ENCODE measurements at regions of chr9 and their contacts with region 1.

Region 1: GRCh38 chr9:126985870-126986498 is 71.4 kb downstream of the RALGPS1 start:
- DNase-seq: peak; percentile 82
- H3K4me3 Mint-ChIP-seq: peak overlapping the region; percentile 49
- H3K27ac Mint-ChIP-seq: peak overlapping the region; percentile 67
- H3K4me1 Mint-ChIP-seq: peaks cover 40% of the 10 kb centered on the region
- H3K27me3 Mint-ChIP-seq: peaks cover 68% of the 10 kb centered on the region

Region 2: DNA sequence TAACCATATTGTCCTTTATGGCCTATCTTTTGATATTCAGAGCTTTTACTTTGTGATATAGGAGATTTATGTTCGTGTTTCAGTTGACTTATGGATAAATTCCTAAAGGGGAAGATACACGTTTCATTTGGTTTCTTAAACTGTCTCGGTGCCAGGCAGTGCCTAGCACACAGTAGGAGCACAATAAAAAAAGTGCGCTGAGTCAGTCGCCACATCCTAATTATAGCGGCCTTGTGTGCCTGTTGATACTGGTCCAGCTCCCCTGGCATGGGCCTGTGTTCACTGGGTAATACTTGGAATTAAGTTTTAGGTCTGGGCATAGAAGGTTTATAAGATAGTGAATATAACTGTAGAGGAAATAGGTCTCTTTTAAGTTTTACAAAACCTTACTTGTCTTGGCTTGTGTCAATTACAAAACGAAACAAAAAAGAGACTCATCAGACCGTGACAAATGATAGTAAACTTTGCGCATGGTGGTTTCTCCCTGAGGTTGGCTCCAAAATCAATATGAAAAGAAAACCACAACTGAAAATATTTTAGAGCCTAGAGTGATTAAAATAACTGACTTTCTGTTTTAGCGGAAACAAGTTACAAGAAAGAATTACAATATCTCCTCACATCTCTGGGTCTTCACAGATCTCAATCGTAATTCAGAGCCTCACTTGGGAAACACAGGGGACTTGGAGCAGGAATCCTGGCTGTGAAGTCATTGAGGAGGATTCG is 574.6 kb before region 1 on chr9:
- intact Hi-C with region 1: loop called (anchors 10 kb)
- DNase-seq: peak; percentile 46
- H3K4me3 Mint-ChIP-seq: peak overlapping the region; percentile 35
- H3K27ac Mint-ChIP-seq: peak overlapping the region; percentile 58
- H3K4me1 Mint-ChIP-seq: peaks cover 32% of the 10 kb centered on the region
- H3K27me3 Mint-ChIP-seq: peaks cover 13% of the 10 kb centered on the region

Region 3: DNA sequence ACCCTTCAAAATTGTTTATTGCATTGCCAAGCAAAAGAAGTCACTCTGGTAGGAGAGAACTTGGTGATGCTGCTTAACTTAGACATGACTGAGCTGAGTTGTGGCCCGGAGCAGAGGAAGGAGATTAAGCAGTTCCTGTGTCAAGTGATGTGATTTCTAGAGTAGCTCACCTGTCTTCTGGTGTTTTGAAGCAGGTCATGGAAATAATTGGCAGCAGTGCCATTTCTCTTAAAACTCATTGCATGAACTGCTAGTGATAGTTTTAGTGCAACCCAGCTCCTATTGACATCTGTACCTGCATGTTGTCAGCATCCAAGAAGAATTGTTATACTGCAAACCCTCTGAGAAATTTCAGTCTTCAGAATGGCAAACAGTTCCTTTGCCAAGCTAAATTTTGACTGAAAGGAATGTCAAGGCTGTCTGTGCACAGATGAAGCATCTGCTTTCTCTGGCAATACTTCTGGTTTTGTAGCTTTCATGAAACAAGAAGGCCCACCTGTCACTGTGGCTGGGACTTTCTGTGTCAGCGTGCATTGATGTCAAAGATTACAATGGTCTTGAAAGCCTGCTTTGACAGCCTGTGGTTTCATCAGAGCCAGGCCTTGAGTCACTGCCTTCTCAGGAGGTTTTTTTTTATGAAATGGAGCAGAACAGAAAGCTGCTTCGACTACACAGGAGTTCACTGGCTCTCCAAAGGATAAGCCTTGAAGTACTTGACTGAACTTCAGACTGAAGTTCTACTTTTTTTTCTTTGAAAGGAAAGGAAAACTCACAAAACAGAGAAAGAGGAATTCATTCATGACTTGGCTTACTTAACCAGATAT is 19.2 kb after region 1 on chr9:
- intact Hi-C with region 1: loop called (anchors 1 kb)
- DNase-seq: peak; percentile 73
- H3K4me3 Mint-ChIP-seq: no peak overlapping the region
- H3K27ac Mint-ChIP-seq: peak overlapping the region; percentile 3
- H3K4me1 Mint-ChIP-seq: peaks cover 22% of the 10 kb centered on the region
- H3K27me3 Mint-ChIP-seq: peaks cover 46% of the 10 kb centered on the region

Region 4: DNA sequence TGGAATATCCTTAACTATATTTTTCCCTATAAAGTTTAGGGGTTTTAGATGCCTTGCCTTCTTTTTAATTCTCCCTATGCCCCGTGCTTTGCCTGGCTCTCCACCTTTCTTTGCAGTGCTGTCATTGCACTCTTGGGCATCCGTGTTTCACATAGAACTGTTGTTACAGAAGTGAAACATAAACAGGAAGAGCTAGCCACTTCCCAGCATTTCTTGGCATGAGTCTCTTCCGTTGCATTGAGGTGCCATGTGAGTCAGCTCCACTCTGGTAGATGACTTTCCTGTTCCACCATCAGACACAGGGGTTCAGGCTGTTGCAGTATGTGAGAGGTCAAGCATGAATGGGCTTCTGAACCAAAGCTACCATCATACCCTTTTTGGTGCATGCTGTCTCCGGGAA is 63.1 kb after region 1 on chr9:
- intact Hi-C with region 1: loop called (anchors 1 kb)
- DNase-seq: peak; percentile 24
- H3K4me3 Mint-ChIP-seq: peak overlapping the region; percentile 31
- H3K27ac Mint-ChIP-seq: no peak overlapping the region
- H3K4me1 Mint-ChIP-seq: peaks cover 24% of the 10 kb centered on the region
- H3K27me3 Mint-ChIP-seq: peaks cover 16% of the 10 kb centered on the region

Region 5: DNA sequence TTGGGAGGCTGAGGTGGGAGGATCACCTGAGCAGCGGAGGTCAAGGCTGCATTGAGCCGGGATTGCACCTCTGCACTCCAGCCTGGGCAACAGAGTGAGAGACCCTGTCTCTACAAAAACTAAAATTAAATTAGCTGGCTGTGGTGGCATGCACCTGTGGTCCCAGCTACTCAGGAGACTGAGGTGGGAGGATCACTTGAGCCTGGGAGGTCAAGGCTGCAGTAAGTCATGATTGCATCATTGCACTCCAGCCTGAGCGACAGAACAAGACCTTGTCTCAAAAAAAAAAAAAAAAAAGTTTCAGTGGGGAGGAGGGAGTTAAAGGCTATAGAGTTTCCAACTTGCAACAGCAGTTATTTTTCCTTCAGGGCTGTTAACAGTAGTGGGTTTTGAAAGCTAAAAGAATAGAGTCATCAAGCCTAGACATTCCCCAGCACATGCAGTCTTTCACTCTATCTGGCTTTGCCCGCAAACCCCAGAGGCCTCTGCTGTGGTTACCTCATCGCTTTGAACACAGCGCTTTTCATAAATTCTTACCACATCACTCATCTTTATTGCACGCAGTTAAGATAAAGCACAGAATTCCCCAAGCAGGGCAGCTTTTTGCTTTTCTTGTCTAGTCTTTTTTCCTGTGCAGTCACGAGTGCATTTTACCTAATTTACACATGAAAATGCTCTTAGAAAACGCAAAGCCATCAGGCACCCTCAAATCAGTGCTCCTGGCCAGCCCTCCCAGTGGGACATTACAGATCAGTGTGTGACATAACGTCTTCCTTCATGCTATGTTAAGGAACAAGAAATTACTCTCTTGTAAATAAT is 402.3 kb after region 1 on chr9:
- intact Hi-C with region 1: loop called (anchors 10 kb)
- DNase-seq: peak; percentile 83
- H3K4me3 Mint-ChIP-seq: peak overlapping the region; percentile 24
- H3K27ac Mint-ChIP-seq: peak overlapping the region; percentile 74
- H3K4me1 Mint-ChIP-seq: peaks cover 26% of the 10 kb centered on the region
- H3K27me3 Mint-ChIP-seq: peaks cover 41% of the 10 kb centered on the region

Measured in activated T-helper 2 cell treated with anti-CD3 and anti-CD28 coated beads, Interferon-gamma antibody, Interleukin-2, Interleukin-4, amounts not matched to agents 10 μg/mL and 5 μg/mL and 100 μg/mL, durations not matched to agents 14 hours and 24 hours and 36 hours (primary cell).